Tibial artery (tissue), 4 donors: ENCODE measurements at regions of chr2 and their contacts with region 1.

Region 1: GRCh38 chr2:25376750-25377621 is 35.3 kb upstream of the DNMT3A start:
- DNase-seq: peak; percentile 75 to 88
- H3K4me3 ChIP-seq: peak overlapping the region; percentile 22 to 29
- H3K27ac ChIP-seq: no peak overlapping the region
- H3K4me1 ChIP-seq: peaks cover 0 to 28% (median 13%) of the 10 kb centered on the region in 4 donors
- H3K27me3 ChIP-seq: no peaks in the 10 kb centered on the region
- CTCF ChIP-seq: peak; percentile 89 to 95

Region 2: DNA sequence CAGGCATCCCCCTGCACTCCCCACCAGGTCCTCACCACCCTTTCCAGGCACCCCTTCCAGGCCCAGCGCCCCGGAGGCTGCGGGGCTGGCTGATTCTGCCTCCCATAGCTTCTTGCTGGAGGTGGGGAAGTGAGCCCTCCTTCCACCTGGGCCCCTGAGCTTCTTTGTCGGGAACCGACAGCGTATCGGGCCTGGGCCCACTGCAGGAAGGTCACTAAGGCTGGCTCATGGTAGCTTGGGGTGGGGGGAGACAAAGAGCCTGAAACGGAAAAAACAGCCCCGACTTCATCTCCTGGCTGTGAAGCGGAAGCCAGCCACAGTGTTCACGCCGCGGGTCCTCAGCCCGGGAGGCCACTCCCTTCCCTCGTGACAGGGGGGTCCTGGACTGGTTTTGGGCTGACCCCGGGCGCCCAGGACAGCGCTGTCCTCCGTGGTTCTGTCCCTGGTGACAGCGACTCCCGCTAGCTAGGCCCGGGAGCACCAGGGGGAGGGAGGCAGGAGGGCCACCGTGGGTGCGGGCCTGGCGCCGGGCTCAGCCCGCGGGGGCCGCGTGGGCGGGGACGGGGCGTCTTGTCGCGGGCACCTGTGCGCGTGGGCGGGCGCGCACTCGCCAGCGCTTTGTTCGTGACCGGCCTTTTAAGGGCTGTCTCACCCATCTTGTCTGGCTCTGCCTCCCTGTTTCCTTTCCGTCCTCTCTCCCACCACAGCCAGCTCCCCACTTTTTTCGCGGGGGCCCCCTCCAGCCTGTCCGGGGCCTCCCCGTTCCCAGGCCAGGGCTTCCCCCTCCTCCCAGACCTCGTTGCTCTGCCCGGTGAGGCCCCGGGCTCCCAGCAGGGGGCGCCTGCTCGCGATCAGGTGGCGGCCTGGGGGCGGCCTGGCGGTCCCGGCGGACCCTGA is 100.2 kb before region 1 on chr2:
- intact Hi-C with region 1: no loop called
- DNase-seq: peak; percentile 42 to 82
- H3K4me3 ChIP-seq: peak overlapping the region; percentile 49 to 53
- H3K27ac ChIP-seq: peak overlapping the region; percentile 77 to 80
- H3K4me1 ChIP-seq: peaks cover 0 to 42% (median 27%) of the 10 kb centered on the region in 4 donors
- H3K27me3 ChIP-seq: no peaks in the 10 kb centered on the region
- CTCF ChIP-seq: peak; percentile 75 to 87

Region 3: DNA sequence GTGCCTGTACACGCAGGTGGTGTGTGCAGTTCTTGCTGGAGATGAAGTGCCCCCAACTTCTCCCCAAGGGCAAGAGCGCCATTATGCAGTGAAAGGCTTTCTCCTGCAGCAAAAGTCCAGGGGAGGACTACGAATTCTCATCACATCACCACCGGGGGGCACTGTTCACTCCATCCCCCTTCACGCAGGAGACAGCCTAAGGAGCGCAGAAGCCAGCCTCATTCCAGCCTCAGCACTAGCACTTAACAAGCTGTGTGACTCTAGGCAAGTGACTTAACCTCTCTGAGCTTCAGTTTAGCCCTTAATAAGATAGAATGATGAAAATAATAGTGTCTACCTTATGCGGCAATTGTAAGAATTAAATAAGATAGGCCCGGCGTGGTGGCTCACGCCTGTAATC is 67.6 kb before region 1 on chr2:
- intact Hi-C with region 1: loop called (anchors 10 kb)
- DNase-seq: peak in 1 of 2 donors; percentile 43
- H3K4me3 ChIP-seq: no peak overlapping the region
- H3K27ac ChIP-seq: no peak overlapping the region
- H3K4me1 ChIP-seq: peaks cover 7 to 50% (median 32%) of the 10 kb centered on the region in 4 donors
- H3K27me3 ChIP-seq: no peaks in the 10 kb centered on the region
- CTCF ChIP-seq: peak in 1 of 2 experiments; percentile 31

Region 4: DNA sequence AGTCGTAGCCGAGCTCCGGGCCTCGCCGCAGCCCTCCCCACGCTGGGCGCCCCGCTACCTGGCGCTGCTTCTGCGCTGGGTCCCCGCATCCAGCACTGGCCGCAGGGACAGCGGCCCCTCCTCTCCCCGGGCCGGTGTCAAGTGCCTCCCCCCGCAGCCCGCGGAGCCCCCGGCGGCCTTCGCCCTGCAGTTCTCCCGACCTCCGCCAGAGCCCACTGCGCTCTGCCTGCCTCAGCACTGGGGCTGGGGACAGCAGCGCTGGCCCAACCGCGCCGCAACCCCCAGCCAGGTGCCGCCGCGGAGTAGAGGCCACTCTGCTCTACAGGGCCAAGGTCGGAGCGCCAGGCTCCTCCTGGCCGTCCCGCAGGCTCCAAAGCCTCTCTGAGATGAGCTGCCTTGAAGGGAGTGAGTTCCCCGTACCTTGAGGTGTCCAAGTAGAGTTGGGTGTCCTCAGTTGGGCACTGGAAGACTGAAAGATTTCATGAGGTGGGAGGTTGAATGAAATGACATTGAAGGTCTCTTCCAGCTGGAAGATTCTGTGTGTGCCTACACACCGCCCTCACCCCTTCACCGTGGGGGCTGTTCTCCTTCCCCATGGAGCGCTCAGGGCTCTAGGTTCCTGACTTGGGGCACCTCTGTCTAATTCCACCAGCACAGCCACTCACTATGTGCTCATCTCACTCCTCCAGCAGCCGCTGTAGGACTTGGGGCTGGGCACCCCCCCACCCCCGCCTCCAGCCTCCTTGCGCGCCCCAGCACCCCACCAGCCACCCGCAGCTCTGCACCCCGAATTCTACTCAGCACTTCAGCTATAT is 34.4 kb before region 1 on chr2:
- intact Hi-C with region 1: loop called (anchors 5 kb)
- DNase-seq: peak; percentile 71 to 88
- H3K4me3 ChIP-seq: peak overlapping the region; percentile 83 to 87
- H3K27ac ChIP-seq: peak overlapping the region; percentile 31 to 79
- H3K4me1 ChIP-seq: peaks cover 0 to 34% (median 24%) of the 10 kb centered on the region in 4 donors
- H3K27me3 ChIP-seq: no peaks in the 10 kb centered on the region
- CTCF ChIP-seq: peak; percentile 97 to 99

Region 5: DNA sequence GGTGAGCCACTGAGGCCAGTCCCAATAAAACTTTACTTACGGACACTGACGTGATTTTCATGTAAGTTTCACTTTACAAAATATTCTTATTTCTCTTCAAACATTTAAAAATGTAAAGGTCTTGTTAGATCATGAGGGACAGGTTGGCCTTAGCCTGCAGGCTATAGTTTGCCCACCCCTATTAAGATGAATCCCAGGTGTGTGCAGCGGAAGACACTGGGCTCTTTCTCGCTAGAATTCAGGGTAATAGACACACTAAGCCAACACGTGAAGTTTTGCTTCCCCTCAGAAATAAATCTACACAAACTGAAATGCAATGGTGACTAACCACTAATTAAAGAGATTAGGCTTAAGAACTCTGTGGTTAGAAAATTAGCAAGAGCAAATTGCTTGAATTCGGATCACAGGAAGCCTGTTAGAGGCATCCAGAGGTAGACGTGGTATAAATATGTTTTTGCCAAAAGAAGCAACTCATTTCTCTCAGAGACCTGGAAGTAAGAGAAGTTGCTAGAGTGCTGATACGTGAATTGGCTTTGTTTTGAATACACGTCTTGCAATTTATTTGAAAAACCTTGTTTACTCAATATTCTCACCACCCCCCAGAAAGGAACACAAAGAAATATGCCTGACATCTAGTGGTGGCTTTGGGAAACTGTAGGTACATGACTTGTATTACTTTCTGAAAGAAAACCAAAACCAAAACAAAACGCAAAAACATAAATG is 144.8 kb after region 1 on chr2:
- intact Hi-C with region 1: loop called (anchors 10 kb)
- DNase-seq: no peak
- H3K4me3 ChIP-seq: peak overlapping the region in 1 of 2 donors; percentile 9
- H3K27ac ChIP-seq: no peak overlapping the region
- H3K4me1 ChIP-seq: no peaks in the 10 kb centered on the region
- H3K27me3 ChIP-seq: no peaks in the 10 kb centered on the region
- CTCF ChIP-seq: peak; percentile 63 to 74

Region 6: GRCh38 chr2:26112201-26112600 is 735.2 kb after region 1 on chr2:
- intact Hi-C with region 1: no loop called
- DNase-seq: no peak
- H3K4me3 ChIP-seq: no peak overlapping the region
- H3K27ac ChIP-seq: no peak overlapping the region
- H3K4me1 ChIP-seq: no peaks in the 10 kb centered on the region
- H3K27me3 ChIP-seq: no peaks in the 10 kb centered on the region
- CTCF ChIP-seq: no peak